GM12878 (cell line): ENCODE measurements at regions of chr2 and their contacts with region 1.

Region 1: GRCh38 chr2:79887747-79888374 is 375.0 kb downstream of the CTNNA2 start:
- DNase-seq: peak; percentile 9
- ATAC-seq: peak; percentile 84
- H3K4me3 ChIP-seq: no peak overlapping the region
- H3K27ac ChIP-seq: no peak overlapping the region
- H3K4me1 ChIP-seq: no peaks in the 10 kb centered on the region
- H3K27me3 ChIP-seq: no peaks in the 10 kb centered on the region
- CTCF ChIP-seq: peak; percentile 53 to 82 (median 54); a peak in 5 of 6 replicates
- EP300 ChIP-seq: no peak
- POLR2A ChIP-seq: no peak
- RAD21 ChIP-seq: peak; percentile 96

Region 2: GRCh38 chr2:78992451-78992806 is 895.4 kb before region 1 on chr2:
- CTCF ChIA-PET with region 1: no interaction called
- POLR2A ChIA-PET with region 1: no interaction called
- RAD21 ChIA-PET with region 1: interaction called, 3 read pairs
- SMC1A ChIA-PET with region 1: no interaction called
- in situ Hi-C with region 1: no loop called
- intact Hi-C with region 1: loop called (anchors 5 kb)
- DNase-seq: no peak
- ATAC-seq: peak; percentile 79
- H3K4me3 ChIP-seq: no peak overlapping the region; the same call in 1 of the 2 replicates
- H3K27ac ChIP-seq: no peak overlapping the region
- H3K4me1 ChIP-seq: no peaks in the 10 kb centered on the region
- H3K27me3 ChIP-seq: peaks cover 2 to 4% of the 10 kb centered on the region in 2 experiments; a peak in 3 of 4 replicates
- CTCF ChIP-seq: peak; percentile 21 to 50 (median 33)
- EP300 ChIP-seq: no peak
- POLR2A ChIP-seq: no peak
- RAD21 ChIP-seq: no peak

Region 3: GRCh38 chr2:79041032-79041448 is 846.8 kb before region 1 on chr2:
- CTCF ChIA-PET with region 1: interaction called, 3 read pairs
- POLR2A ChIA-PET with region 1: no interaction called
- RAD21 ChIA-PET with region 1: interaction called, 3 read pairs
- SMC1A ChIA-PET with region 1: no interaction called
- in situ Hi-C with region 1: no loop called
- intact Hi-C with region 1: loop called (anchors 10 kb)
- DNase-seq: no peak
- ATAC-seq: peak; percentile 68; the same call in 2 of the 3 replicates
- H3K4me3 ChIP-seq: no peak overlapping the region
- H3K27ac ChIP-seq: no peak overlapping the region
- H3K4me1 ChIP-seq: no peaks in the 10 kb centered on the region
- H3K27me3 ChIP-seq: no peaks in the 10 kb centered on the region
- CTCF ChIP-seq: peak in 2 of 3 experiments; percentile 26 to 31; a peak in 4 of 6 replicates
- EP300 ChIP-seq: no peak
- POLR2A ChIP-seq: no peak
- RAD21 ChIP-seq: 0 out of 2 replicates have a peak, but pooled peaks have one; percentile 14

Region 4: GRCh38 chr2:79219383-79219988 is 668.4 kb before region 1 on chr2:
- CTCF ChIA-PET with region 1: interaction called, 3 read pairs
- POLR2A ChIA-PET with region 1: no interaction called
- RAD21 ChIA-PET with region 1: no interaction called
- SMC1A ChIA-PET with region 1: no interaction called
- in situ Hi-C with region 1: loop called (anchors 10 kb)
- intact Hi-C with region 1: loop called (anchors 5 kb)
- DNase-seq: peak; percentile 8
- ATAC-seq: peak; percentile 79
- H3K4me3 ChIP-seq: no peak overlapping the region
- H3K27ac ChIP-seq: no peak overlapping the region
- H3K4me1 ChIP-seq: no peaks in the 10 kb centered on the region
- H3K27me3 ChIP-seq: no peaks in the 10 kb centered on the region
- CTCF ChIP-seq: peak; percentile 68 to 78 (median 70)
- EP300 ChIP-seq: no peak
- POLR2A ChIP-seq: no peak
- RAD21 ChIP-seq: peak; percentile 66

Region 5: DNA sequence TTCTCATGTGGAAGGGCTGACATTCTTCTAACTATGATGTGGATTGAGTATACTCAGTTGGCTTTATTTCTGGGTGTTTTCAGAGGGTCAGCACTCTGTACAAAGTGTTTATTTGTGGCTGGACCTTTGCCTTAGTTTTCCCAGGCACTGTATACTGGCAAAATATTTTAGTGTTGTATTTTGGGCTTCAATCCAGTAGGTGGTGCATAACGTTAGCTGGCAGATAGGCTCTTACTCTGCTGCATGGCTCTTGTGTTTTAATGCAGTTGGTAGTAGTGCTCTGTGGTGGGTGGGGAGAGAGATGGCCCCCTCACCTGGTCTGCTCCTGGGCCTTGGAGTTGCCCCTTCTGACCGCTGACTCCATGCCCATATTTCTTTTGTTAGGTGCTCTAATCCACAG is 652.7 kb before region 1 on chr2:
- CTCF ChIA-PET with region 1: interaction called, 4 read pairs
- POLR2A ChIA-PET with region 1: no interaction called
- RAD21 ChIA-PET with region 1: no interaction called
- SMC1A ChIA-PET with region 1: no interaction called
- in situ Hi-C with region 1: no loop called
- intact Hi-C with region 1: loop called (anchors 2 kb)
- DNase-seq: no peak
- ATAC-seq: peak; percentile 64
- H3K4me3 ChIP-seq: no peak overlapping the region
- H3K27ac ChIP-seq: no peak overlapping the region
- H3K4me1 ChIP-seq: no peaks in the 10 kb centered on the region
- H3K27me3 ChIP-seq: no peaks in the 10 kb centered on the region
- CTCF ChIP-seq: peak in 2 of 3 experiments; percentile 28 to 30; a peak in 2 of 6 replicates
- EP300 ChIP-seq: no peak
- POLR2A ChIP-seq: no peak
- RAD21 ChIP-seq: no peak

Region 6: GRCh38 chr2:79876430-79876829 is 11.4 kb before region 1 on chr2:
- CTCF ChIA-PET with region 1: no interaction called
- POLR2A ChIA-PET with region 1: no interaction called
- RAD21 ChIA-PET with region 1: no interaction called
- SMC1A ChIA-PET with region 1: no interaction called
- in situ Hi-C with region 1: no loop called
- intact Hi-C with region 1: no loop called
- DNase-seq: no peak
- ATAC-seq: 0 out of 3 replicates have a peak, but pooled peaks have one; percentile 46
- H3K4me3 ChIP-seq: no peak overlapping the region
- H3K27ac ChIP-seq: no peak overlapping the region
- H3K4me1 ChIP-seq: no peaks in the 10 kb centered on the region
- H3K27me3 ChIP-seq: no peaks in the 10 kb centered on the region
- CTCF ChIP-seq: peak; percentile 23 to 33 (median 29); a peak in 4 of 6 replicates
- EP300 ChIP-seq: no peak
- POLR2A ChIP-seq: no peak
- RAD21 ChIP-seq: 0 out of 2 replicates have a peak, but pooled peaks have one; percentile 5

Region 7: GRCh38 chr2:79901161-79901560 is 13.3 kb after region 1 on chr2:
- CTCF ChIA-PET with region 1: interaction called, 22 read pairs
- POLR2A ChIA-PET with region 1: no interaction called
- RAD21 ChIA-PET with region 1: no interaction called
- SMC1A ChIA-PET with region 1: no interaction called
- in situ Hi-C with region 1: no loop called
- intact Hi-C with region 1: no loop called
- DNase-seq: no peak
- ATAC-seq: no peak
- H3K4me3 ChIP-seq: no peak overlapping the region
- H3K27ac ChIP-seq: no peak overlapping the region
- H3K4me1 ChIP-seq: no peaks in the 10 kb centered on the region
- H3K27me3 ChIP-seq: no peaks in the 10 kb centered on the region
- CTCF ChIP-seq: no peak
- EP300 ChIP-seq: no peak
- POLR2A ChIP-seq: no peak
- RAD21 ChIP-seq: no peak